Vagina (tissue), 2 donors: ENCODE measurements at regions of chr18 and their contacts with region 1.

Region 1: GRCh38 chr18:67938660-67939059 is 422.1 kb upstream of the DSEL start:
- DNase-seq: no peak
- H3K4me3 ChIP-seq: no peak overlapping the region
- H3K27ac ChIP-seq: no peak overlapping the region
- H3K4me1 ChIP-seq: no peaks in the 10 kb centered on the region
- H3K27me3 ChIP-seq: no peaks in the 10 kb centered on the region
- CTCF ChIP-seq: no peak
- POLR2A ChIP-seq: no peak

Region 2: GRCh38 chr18:66511810-66512209 is 1426.8 kb before region 1 on chr18:
- intact Hi-C with region 1: no loop called
- DNase-seq: no peak
- H3K4me3 ChIP-seq: no peak overlapping the region
- H3K27ac ChIP-seq: no peak overlapping the region
- H3K4me1 ChIP-seq: no peaks in the 10 kb centered on the region
- H3K27me3 ChIP-seq: no peaks in the 10 kb centered on the region
- CTCF ChIP-seq: no peak
- POLR2A ChIP-seq: no peak

Region 3: GRCh38 chr18:67926929-67927864 is 11.5 kb before region 1 on chr18:
- intact Hi-C with region 1: loop called (anchors 1 kb)
- DNase-seq: no peak
- H3K4me3 ChIP-seq: no peak overlapping the region
- H3K27ac ChIP-seq: no peak overlapping the region
- H3K4me1 ChIP-seq: no peaks in the 10 kb centered on the region
- H3K27me3 ChIP-seq: no peaks in the 10 kb centered on the region
- CTCF ChIP-seq: no peak
- POLR2A ChIP-seq: no peak

Region 4: GRCh38 chr18:68803356-68803755 is 864.7 kb after region 1 on chr18:
- intact Hi-C with region 1: no loop called
- DNase-seq: no peak
- H3K4me3 ChIP-seq: no peak overlapping the region
- H3K27ac ChIP-seq: peak overlapping the region; percentile 23
- H3K4me1 ChIP-seq: no peaks in the 10 kb centered on the region
- H3K27me3 ChIP-seq: no peaks in the 10 kb centered on the region
- CTCF ChIP-seq: no peak
- POLR2A ChIP-seq: no peak